Activated B cell treated with CpG ODN at 0.5 μM for 24 hours (primary cell): ENCODE measurements at regions of chr12 and their contacts with region 1.

Region 1: GRCh38 chr12:50763639-50764285 is at the start of gene ATF1:
- DNase-seq: peak; percentile 89
- ATAC-seq: peak; percentile 80
- H3K4me3 Mint-ChIP-seq: peak within 1 kb of the TSS; percentile 95
- H3K27ac Mint-ChIP-seq: peak within 1 kb of the TSS; percentile 96
- H3K4me1 Mint-ChIP-seq: peaks cover 36% of the 10 kb centered on the region
- H3K27me3 Mint-ChIP-seq: no peaks in the 10 kb centered on the region
- CTCF ChIP-seq: no peak
- total RNA-seq, gene ATF1: 37.7 and 42.5 TPM in 2 replicates

Region 2: DNA sequence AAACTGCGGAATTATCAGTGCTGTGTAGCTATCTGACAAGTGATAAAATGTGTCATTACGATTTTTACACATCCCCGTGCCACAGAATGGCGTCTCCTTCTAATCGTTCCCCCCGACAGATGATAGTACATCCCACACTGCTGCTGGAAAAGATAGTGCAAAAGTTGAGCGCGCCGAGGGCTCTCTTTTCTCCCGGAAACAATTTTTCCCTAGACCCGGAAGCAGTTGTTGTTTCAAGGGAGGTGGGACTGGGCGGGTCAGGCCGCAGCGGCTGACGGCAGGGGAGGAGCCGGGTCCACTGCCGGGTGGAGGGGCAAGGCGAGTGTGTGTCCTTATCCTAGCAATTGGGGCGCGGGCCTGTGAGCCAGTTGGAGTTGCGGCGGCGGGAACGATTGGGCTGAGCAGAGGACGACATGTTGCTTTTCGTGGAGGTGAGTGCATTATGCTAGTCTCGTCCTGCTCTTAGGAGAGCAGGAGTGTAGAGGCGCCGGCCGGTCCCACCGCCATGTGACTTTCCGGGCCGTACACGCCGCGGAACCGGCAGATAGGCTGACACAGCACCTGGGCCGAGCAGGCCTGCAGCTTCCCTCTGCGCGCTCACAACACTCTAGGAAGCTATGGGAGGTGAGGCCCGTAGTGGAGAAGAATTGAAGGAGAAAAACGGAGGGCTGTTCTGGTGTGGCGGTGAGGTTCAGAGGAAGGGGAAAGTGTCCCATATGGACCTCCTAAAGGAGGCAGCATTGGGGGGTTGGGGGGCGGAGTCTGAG is 363.0 kb before region 1 on chr12 and contains the start of gene LARP4:
- CTCF ChIA-PET with region 1: no interaction called
- POLR2A ChIA-PET with region 1: no interaction called
- intact Hi-C with region 1: loop called (anchors 1 kb)
- DNase-seq: peak; percentile 77
- ATAC-seq: peak; percentile 94
- H3K4me3 Mint-ChIP-seq: peak within 1 kb of the TSS; percentile 97
- H3K27ac Mint-ChIP-seq: peak within 1 kb of the TSS; percentile 91
- H3K4me1 Mint-ChIP-seq: peaks cover 38% of the 10 kb centered on the region
- H3K27me3 Mint-ChIP-seq: peaks cover 5% of the 10 kb centered on the region
- CTCF ChIP-seq: no peak
- total RNA-seq, gene LARP4: 48.2 and 56.3 TPM in 2 replicates

Region 3: GRCh38 chr12:50825372-50825838 is 61.6 kb after region 1 on chr12:
- CTCF ChIA-PET with region 1: interaction called, 22 read pairs
- POLR2A ChIA-PET with region 1: interaction called, 5 read pairs
- intact Hi-C with region 1: loop called (anchors 1 kb)
- DNase-seq: no peak
- ATAC-seq: peak; percentile 80
- H3K4me3 Mint-ChIP-seq: no peak overlapping the region
- H3K27ac Mint-ChIP-seq: no peak overlapping the region
- H3K4me1 Mint-ChIP-seq: peaks cover 6% of the 10 kb centered on the region
- H3K27me3 Mint-ChIP-seq: no peaks in the 10 kb centered on the region
- CTCF ChIP-seq: no peak

Region 4: GRCh38 chr12:50986966-50987737 is 223.4 kb after region 1 on chr12:
- CTCF ChIA-PET with region 1: interaction called, 66 read pairs
- POLR2A ChIA-PET with region 1: interaction called, 15 read pairs
- intact Hi-C with region 1: loop called (anchors 1 kb)
- DNase-seq: no peak
- ATAC-seq: peak; percentile 72
- H3K4me3 Mint-ChIP-seq: no peak overlapping the region
- H3K27ac Mint-ChIP-seq: no peak overlapping the region
- H3K4me1 Mint-ChIP-seq: peaks cover 5% of the 10 kb centered on the region
- H3K27me3 Mint-ChIP-seq: no peaks in the 10 kb centered on the region
- CTCF ChIP-seq: no peak

Region 5: GRCh38 chr12:51047655-51048540 is 284.1 kb after region 1 on chr12 and contains the start of gene LETMD1:
- CTCF ChIA-PET with region 1: no interaction called
- POLR2A ChIA-PET with region 1: interaction called, 5 read pairs
- intact Hi-C with region 1: loop called (anchors 1 kb)
- DNase-seq: peak; percentile 81
- ATAC-seq: peak; percentile 96
- H3K4me3 Mint-ChIP-seq: peak within 1 kb of the TSS; percentile 92
- H3K27ac Mint-ChIP-seq: peak within 1 kb of the TSS; percentile 87
- H3K4me1 Mint-ChIP-seq: peaks cover 30% of the 10 kb centered on the region
- H3K27me3 Mint-ChIP-seq: no peaks in the 10 kb centered on the region
- CTCF ChIP-seq: peak; percentile 64
- total RNA-seq, gene LETMD1: 82.8 and 92.0 TPM in 2 replicates

Region 6: DNA sequence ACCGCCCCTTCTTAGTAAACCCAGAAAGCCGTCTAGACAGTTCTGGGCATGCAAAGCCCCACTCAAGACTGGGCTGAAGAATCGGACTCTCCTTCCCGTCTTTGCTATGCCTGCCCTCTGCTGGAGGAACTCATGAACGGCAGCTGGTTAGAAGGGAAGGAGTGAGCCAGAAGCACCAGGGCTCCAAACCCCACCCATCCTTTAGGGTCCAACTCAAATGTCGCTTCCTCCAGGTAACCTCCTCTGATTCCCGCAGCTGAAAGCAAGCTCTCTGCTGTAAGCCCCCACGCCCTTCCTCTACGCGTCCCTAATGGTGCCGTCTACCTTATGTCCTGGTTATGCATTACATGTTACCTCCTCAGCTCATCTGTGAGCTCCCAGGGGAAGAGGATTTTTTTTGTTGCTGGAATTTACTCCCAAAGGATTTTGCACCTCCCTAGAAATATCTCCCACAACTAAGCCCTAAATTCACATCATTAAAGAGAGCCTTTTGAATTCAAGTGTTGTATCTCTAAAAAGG is 768.3 kb after region 1 on chr12:
- CTCF ChIA-PET with region 1: no interaction called
- POLR2A ChIA-PET with region 1: no interaction called
- intact Hi-C with region 1: loop called (anchors 2 kb)
- DNase-seq: peak; percentile 56
- ATAC-seq: peak; percentile 97
- H3K4me3 Mint-ChIP-seq: no peak overlapping the region
- H3K27ac Mint-ChIP-seq: no peak overlapping the region
- H3K4me1 Mint-ChIP-seq: peaks cover 11% of the 10 kb centered on the region
- H3K27me3 Mint-ChIP-seq: peaks cover 28% of the 10 kb centered on the region
- CTCF ChIP-seq: peak; percentile 51

Region 7: GRCh38 chr12:51622564-51622963 is 858.8 kb after region 1 on chr12:
- CTCF ChIA-PET with region 1: no interaction called
- POLR2A ChIA-PET with region 1: no interaction called
- intact Hi-C with region 1: no loop called
- DNase-seq: no peak
- ATAC-seq: no peak
- H3K4me3 Mint-ChIP-seq: no peak overlapping the region
- H3K27ac Mint-ChIP-seq: no peak overlapping the region
- H3K4me1 Mint-ChIP-seq: no peaks in the 10 kb centered on the region
- H3K27me3 Mint-ChIP-seq: peaks cover 23% of the 10 kb centered on the region
- CTCF ChIP-seq: no peak